Activated CD4-positive, alpha-beta T cell treated with anti-CD3 and anti-CD28 coated beads for 36 hours (primary cell): ENCODE measurements at regions of chrX and their contacts with region 1.

Region 1: GRCh38 chrX:3791449-3791848 is 78.0 kb upstream of the PRKX start:
- DNase-seq: no peak
- ATAC-seq: no peak
- H3K4me3 Mint-ChIP-seq: no peak overlapping the region
- H3K27ac Mint-ChIP-seq: no peak overlapping the region
- H3K4me1 Mint-ChIP-seq: no peaks in the 10 kb centered on the region
- H3K27me3 Mint-ChIP-seq: peaks cover 3% of the 10 kb centered on the region

Region 2: DNA sequence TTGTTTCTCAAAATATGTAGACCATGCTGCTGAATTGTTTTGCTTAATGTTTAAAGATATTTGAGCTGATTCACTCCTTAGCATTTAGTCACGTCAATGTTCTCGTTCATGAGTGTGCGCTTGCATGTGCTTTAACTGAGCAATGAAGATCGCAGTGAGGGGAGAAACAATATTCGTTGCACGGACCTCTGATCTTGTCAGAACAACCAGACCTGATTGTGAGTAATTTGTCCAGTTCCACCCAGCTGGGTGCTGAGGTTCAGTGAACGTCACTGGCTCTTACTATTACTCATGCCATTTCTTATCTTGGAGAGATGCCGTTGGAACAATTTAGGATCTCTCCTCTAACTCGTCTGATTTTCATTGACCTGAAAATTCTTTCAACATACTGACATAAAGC is 63.0 kb before region 1 on chrX:
- CTCF ChIA-PET with region 1: no interaction called
- POLR2A ChIA-PET with region 1: no interaction called
- intact Hi-C with region 1: loop called in 1 of 2 experiments (anchors 5 kb)
- DNase-seq: no peak
- ATAC-seq: no peak
- H3K4me3 Mint-ChIP-seq: no peak overlapping the region
- H3K27ac Mint-ChIP-seq: no peak overlapping the region
- H3K4me1 Mint-ChIP-seq: no peaks in the 10 kb centered on the region
- H3K27me3 Mint-ChIP-seq: no peaks in the 10 kb centered on the region